ENCODE measurements at regions of chr3 and their contacts with region 1.

Region 1: DNA sequence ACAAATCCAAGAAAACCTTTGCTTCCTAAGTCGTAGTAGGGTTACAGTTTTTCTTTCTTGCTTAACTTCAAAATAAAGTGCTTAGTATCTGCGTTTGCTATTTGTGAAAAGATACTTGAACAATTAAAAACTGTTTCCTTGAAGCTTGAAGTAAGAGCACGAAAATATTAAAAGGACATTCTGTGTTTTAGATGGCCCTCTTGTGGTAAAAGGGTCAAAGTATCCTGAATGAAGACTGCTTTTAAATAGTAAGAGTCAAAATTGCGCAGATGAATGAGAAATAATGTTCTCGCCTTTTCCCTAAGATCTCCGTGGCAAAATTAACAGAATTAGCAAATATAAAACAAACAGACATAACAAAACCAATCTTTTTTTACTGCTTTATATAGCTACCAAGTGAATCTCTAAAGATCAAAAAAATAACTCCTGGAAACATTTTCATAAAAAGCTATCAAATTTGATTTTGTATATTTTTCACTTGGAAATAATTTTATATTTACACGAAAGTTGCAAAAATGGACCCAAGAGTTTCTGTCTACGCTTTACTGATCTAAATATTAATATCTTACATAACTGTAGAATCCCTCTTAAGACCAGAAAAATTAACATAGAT is 175.4 kb downstream of the MBNL1 start:
- DNase-seq: peak; percentile 75
- H3K4me3 ChIP-seq: no peak overlapping the region; the same call in 1 of the 2 replicates
- H3K27ac ChIP-seq: peak overlapping the region; percentile 11; the same call in 1 of the 2 replicates
- H3K4me1 ChIP-seq: peaks cover 27% of the 10 kb centered on the region
- H3K27me3 ChIP-seq: no peaks in the 10 kb centered on the region

Region 2: GRCh38 chr3:152071924-152072323 is 372.2 kb before region 1 on chr3:
- in situ Hi-C with region 1: loop called (anchors 10 kb)
- DNase-seq: peak; percentile 78
- H3K4me3 ChIP-seq: no peak overlapping the region
- H3K27ac ChIP-seq: no peak overlapping the region
- H3K4me1 ChIP-seq: peaks cover 11% of the 10 kb centered on the region
- H3K27me3 ChIP-seq: no peaks in the 10 kb centered on the region

Region 3: GRCh38 chr3:152268555-152269425 is 175.3 kb before region 1 on chr3 and contains the start of gene MBNL1:
- in situ Hi-C with region 1: loop called (anchors 10 kb)
- DNase-seq: peak; percentile 87
- H3K4me3 ChIP-seq: peak within 1 kb of the TSS; percentile 94
- H3K27ac ChIP-seq: peak within 1 kb of the TSS; percentile 93
- H3K4me1 ChIP-seq: peaks cover 48% of the 10 kb centered on the region
- H3K27me3 ChIP-seq: no peaks in the 10 kb centered on the region
- total RNA-seq, gene MBNL1: 251 and 262 TPM in 2 replicates

Region 4: DNA sequence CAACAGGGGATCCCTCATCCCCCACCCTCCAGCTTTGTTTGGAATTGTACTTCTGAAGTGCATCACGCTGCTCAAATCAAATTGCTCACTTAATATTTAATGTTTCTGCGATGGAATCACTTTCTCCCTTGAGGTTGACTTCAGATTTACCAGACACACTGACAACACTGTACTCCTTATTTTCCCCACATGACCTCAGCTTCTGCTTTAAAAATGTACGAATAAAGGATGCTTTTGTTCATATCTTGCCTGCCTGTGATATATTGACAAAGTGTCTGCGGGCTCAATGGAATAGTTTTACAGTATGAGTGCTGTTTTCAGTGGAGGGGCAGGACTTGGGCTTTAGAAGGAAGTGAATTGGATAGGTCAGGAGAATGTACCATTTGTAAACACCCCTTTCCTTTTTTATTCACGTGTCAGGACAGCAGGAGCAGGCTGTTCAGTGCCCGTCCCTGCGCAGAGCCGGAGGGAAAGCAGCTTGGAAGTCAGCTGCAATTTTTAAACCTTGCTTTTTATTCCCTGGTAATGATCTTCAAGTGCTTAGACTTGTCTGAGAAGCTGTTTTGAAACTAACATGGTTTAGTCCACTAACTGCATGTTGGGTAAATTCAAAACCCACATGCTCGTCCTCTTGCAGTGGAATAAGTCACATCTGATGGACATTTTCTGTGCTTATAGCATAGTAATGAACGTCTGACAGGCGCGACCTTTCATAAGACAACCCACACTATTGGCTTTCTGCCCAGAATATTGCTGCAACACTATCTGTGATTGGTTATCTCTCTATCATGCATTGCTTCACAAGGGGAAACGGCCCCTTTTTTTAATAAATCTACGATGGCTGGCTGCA is 145.5 kb before region 1 on chr3:
- in situ Hi-C with region 1: no loop called
- DNase-seq: peak; percentile 92
- H3K4me3 ChIP-seq: peak overlapping the region; percentile 67
- H3K27ac ChIP-seq: peak overlapping the region; percentile 94
- H3K4me1 ChIP-seq: peaks cover 57% of the 10 kb centered on the region
- H3K27me3 ChIP-seq: no peaks in the 10 kb centered on the region

Measured in GM23248 (cell line).